Activated naive CD8-positive, alpha-beta T cell treated with anti-CD3 and anti-CD28 coated beads, Interleukin-2, amount 10 ng/mL, durations not matched to agents 7 days and 5 days (primary cell): ENCODE measurements at regions of chr2 and their contacts with region 1.

Region 1: DNA sequence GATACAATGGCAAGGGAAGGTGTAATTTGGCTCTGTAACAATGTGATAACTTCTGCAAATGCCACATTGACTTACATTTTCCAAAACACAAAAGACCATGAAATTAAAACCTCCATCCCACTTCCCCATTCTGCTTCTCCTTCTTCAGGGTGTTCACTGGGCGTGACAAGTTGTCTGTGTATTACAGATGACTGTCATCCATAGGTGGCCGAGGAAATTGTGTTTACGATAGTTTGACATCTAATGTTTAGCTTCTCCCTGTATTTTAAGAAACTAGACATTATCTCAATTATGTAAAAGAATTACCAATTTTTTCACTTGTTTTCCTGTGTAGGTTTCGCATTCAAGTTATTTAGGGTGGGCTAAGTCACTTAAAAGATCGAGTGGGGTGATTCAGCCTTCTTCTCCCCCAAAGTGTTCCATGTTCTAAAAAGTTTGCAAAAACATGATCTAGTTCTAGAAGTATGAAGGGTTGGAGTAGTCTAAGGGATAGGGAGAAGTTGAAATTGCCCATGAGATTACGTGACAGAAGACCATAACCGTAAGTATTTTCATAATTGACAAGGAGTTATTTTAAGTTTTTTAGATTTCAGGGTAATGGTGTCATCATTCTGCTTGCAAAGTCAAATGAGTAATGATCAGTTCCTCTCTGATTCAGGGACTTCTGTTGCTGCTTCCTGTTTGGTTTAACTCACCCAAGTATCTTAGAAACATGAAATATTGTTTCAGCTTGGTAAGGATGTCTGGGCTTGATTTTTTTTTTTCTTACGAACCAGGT is 25.2 kb upstream of the CYTIP start:
- DNase-seq: no peak
- ATAC-seq: peak; percentile 72
- H3K4me3 Mint-ChIP-seq: peak overlapping the region; percentile 78
- H3K27ac Mint-ChIP-seq: peak overlapping the region; percentile 97
- H3K4me1 Mint-ChIP-seq: peaks cover 89% of the 10 kb centered on the region
- H3K27me3 Mint-ChIP-seq: no peaks in the 10 kb centered on the region

Region 2: GRCh38 chr2:157480182-157480961 is 11.3 kb after region 1 on chr2:
- POLR2A ChIA-PET with region 1: interaction called, 34 read pairs
- DNase-seq: peak; percentile 53
- ATAC-seq: peak; percentile 46
- H3K4me3 Mint-ChIP-seq: peak overlapping the region; percentile 84
- H3K27ac Mint-ChIP-seq: peak overlapping the region; percentile 97
- H3K4me1 Mint-ChIP-seq: peaks cover 65% of the 10 kb centered on the region
- H3K27me3 Mint-ChIP-seq: no peaks in the 10 kb centered on the region